H1 (cell line): ENCODE measurements at regions of chr9 and their contacts with region 1.

Region 1: GRCh38 chr9:6412487-6413364 is at the start of gene UHRF2:
- DNase-seq: peak; percentile 95 to 97
- H3K4me3 ChIP-seq: peak within 1 kb of the TSS; percentile 90 to 97 (median 94)
- H3K27ac ChIP-seq: peak within 1 kb of the TSS; percentile 88
- H3K4me1 ChIP-seq: peaks cover 0 to 7% (median 5%) of the 10 kb centered on the region in 4 experiments; a peak in 3 of 7 replicates
- H3K27me3 ChIP-seq: peaks cover 0 to 6% (median 0%) of the 10 kb centered on the region in 4 experiments; a peak in 2 of 7 replicates
- CTCF ChIP-seq: no peak
- EP300 ChIP-seq: peak in 1 of 2 experiments; percentile 45; a peak in 1 of 3 replicates
- POLR2A ChIP-seq: peak; percentile 82 to 98
- RAD21 ChIP-seq: no peak
- total RNA-seq, gene UHRF2: 42.5 and 48.0 TPM in 2 replicates

Region 2: DNA sequence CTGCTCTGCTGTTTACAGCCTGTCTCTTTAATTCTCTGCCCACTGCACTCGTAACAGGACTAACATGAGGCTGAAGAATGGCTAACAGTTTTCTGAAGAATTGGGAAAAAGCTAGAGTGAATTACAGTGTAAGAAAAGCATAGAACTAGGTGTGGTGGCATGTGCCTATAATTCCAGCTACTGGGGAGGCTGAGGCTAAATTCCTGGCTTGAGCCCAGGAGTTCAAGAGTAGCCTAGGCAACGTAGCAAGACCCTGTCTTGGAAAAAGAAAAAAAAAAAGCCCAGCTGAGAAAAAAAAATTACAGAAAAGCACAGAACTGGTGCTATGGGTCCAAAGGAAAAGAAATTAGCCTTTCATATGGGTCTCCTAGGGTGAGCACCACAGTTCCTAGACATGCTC is 13.7 kb before region 1 on chr9:
- CTCF ChIA-PET with region 1: interaction called, 5 read pairs
- POLR2A ChIA-PET with region 1: interaction called, 17 read pairs
- DNase-seq: no peak
- H3K4me3 ChIP-seq: no peak overlapping the region
- H3K27ac ChIP-seq: no peak overlapping the region
- H3K4me1 ChIP-seq: no peaks in the 10 kb centered on the region
- H3K27me3 ChIP-seq: no peaks in the 10 kb centered on the region
- CTCF ChIP-seq: no peak
- EP300 ChIP-seq: no peak
- POLR2A ChIP-seq: no peak
- RAD21 ChIP-seq: no peak

Region 3: DNA sequence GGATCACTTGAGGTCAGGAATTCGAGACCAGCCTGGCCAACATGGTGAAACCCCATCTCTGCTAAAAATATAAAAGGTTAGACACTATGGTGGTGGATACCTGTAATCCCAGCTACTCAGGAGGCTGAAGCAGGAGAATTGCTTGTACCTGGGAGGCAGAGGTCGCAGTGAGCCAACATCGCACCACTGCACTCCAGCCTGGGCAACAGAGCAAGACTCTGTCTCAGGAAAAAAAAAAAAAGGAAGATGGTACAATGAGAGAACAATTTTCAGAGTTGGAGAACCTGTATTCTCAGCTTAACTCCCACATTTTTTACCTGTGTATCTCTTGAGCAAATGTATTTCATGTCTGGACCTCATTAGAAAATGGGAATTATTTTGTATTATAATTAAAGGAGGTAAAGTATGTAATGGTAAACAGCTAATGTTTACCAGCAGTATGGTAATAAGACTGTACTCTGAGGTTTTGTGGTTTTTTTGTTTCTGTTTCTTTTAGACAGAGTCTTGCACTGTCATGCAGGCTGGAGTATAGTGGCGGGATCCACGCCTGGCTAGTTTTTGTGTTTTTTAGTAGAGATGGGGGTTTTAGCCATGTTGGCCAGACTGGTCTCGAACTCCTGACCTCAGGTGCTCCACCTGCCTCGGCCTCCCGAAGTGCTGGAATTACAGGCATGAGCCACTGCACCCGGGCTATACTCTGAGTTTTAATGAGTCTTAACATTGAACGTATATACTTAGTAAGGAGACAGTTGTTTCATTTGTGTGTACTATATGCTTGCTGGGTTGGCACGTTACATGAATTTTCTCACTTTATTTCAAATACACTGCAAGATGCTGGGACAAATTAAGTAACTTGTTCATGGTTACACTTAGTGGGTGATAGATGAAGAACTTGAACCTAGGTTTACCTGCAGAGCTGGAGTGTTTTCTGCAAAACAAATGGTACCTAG is 16.5 kb after region 1 on chr9:
- CTCF ChIA-PET with region 1: interaction called, 7 read pairs
- POLR2A ChIA-PET with region 1: interaction called, 36 read pairs
- DNase-seq: no peak
- H3K4me3 ChIP-seq: no peak overlapping the region
- H3K27ac ChIP-seq: no peak overlapping the region
- H3K4me1 ChIP-seq: no peaks in the 10 kb centered on the region
- H3K27me3 ChIP-seq: no peaks in the 10 kb centered on the region
- CTCF ChIP-seq: no peak
- EP300 ChIP-seq: no peak
- POLR2A ChIP-seq: no peak
- RAD21 ChIP-seq: no peak